ENCODE measurements at regions of chr4 and their contacts with region 1.

Region 1: GRCh38 chr4:122914292-122914904 is 8.0 kb downstream of the NUDT6 start:
- DNase-seq: peak; percentile 77
- H3K4me3 ChIP-seq: no peak overlapping the region
- H3K27ac ChIP-seq: no peak overlapping the region
- H3K4me1 ChIP-seq: peaks cover 4% of the 10 kb centered on the region
- H3K27me3 ChIP-seq: no peaks in the 10 kb centered on the region
- CTCF ChIP-seq: peak; percentile 27 to 30
- POLR2A ChIP-seq: no peak

Region 2: DNA sequence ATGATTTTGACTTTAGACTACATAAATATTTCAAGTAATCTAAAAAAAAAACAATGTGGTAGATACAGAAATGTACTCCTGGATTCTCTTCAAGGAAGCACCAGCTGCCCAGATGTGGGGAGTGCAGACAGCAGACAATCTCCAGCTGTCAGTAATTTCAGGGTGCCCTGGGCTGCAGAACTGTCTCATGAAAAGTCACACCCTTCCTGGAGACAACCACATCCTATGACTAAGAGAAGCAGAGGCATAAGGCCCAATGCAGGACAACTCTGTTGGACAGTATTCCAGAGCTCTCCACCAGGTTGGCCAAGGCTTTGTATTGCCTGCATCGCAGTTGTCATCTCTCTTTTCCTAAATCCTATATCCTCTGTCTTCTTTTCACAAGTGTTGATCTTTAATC is 796.7 kb before region 1 on chr4:
- CTCF ChIA-PET with region 1: no interaction called
- POLR2A ChIA-PET with region 1: no interaction called
- dilution Hi-C with region 1: no loop called
- intact Hi-C with region 1: no loop called
- DNase-seq: no peak
- H3K4me3 ChIP-seq: no peak overlapping the region
- H3K27ac ChIP-seq: no peak overlapping the region
- H3K4me1 ChIP-seq: no peaks in the 10 kb centered on the region
- H3K27me3 ChIP-seq: no peaks in the 10 kb centered on the region
- CTCF ChIP-seq: no peak
- POLR2A ChIP-seq: no peak

Region 3: GRCh38 chr4:122602277-122603142 is 311.9 kb before region 1 on chr4:
- CTCF ChIA-PET with region 1: interaction called, 32 read pairs
- POLR2A ChIA-PET with region 1: no interaction called
- dilution Hi-C with region 1: no loop called
- intact Hi-C with region 1: loop called (anchors 1 kb)
- DNase-seq: peak; percentile 58
- H3K4me3 ChIP-seq: no peak overlapping the region
- H3K27ac ChIP-seq: no peak overlapping the region
- H3K4me1 ChIP-seq: no peaks in the 10 kb centered on the region
- H3K27me3 ChIP-seq: peaks cover 10 to 14% of the 10 kb centered on the region in 2 experiments
- CTCF ChIP-seq: peak; percentile 15 to 16
- POLR2A ChIP-seq: no peak

Region 4: DNA sequence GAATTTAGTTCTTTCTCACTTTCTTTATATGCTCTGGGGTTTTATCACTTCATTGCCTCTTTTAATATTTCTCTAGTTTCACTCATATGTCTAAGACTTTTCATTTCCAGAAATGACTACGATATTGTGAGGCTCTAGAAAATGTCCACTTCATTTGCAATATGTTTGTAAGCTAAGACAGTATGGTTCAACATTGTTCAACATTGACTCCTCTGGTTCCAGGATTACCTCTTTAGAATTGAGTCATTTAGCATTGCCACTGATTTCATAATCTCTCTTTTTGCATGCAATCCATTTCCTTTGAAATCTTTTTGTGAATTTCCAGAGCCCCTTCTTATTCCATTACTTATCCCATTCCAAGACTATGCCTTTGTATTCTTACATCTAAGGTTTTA is 149.6 kb before region 1 on chr4:
- CTCF ChIA-PET with region 1: interaction called, 183 read pairs
- POLR2A ChIA-PET with region 1: no interaction called
- dilution Hi-C with region 1: loop called (anchors 25 kb)
- intact Hi-C with region 1: no loop called
- DNase-seq: peak; percentile 44
- H3K4me3 ChIP-seq: no peak overlapping the region
- H3K27ac ChIP-seq: peak overlapping the region; percentile 58
- H3K4me1 ChIP-seq: peaks cover 16% of the 10 kb centered on the region
- H3K27me3 ChIP-seq: no peaks in the 10 kb centered on the region
- CTCF ChIP-seq: no peak
- POLR2A ChIP-seq: no peak

Region 5: DNA sequence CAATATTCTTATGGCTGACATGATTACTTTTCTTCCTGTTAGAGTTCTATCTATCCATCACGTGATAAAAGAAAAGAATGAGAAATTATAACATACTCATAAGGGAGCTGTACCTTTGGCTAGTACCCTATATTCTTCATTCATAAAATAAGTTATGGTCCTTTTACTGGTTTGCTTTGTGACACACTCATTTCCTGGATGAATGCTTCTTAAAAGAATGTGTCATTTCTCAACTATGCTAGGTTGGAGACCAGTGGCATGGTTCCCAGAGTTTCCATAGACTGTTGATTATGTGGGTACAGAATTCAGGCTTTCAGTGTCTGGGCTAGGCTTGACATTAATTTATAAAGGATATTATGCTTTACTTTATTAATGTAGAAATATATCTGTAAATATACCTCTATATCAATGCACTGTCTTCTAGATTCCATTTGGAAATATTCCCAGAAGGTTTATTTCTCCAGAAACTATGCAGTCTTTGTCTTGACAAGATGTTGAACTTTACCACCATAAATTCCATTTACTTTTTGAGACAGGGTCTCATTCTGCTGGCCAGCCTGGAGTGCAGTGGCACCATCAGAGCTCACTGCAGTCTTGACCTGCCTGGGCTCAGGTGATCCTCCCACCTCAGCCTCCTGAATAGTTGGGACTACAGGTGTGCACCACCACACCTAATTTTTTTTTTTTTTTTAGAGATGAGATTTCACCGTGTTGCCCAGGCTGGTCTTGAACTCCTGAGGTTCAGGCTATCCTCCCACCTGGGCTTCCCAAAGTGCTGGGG is 15.8 kb before region 1 on chr4:
- CTCF ChIA-PET with region 1: interaction called, 26 read pairs
- POLR2A ChIA-PET with region 1: no interaction called
- dilution Hi-C with region 1: no loop called
- intact Hi-C with region 1: no loop called
- DNase-seq: peak; percentile 90
- H3K4me3 ChIP-seq: no peak overlapping the region
- H3K27ac ChIP-seq: peak overlapping the region; percentile 76
- H3K4me1 ChIP-seq: peaks cover 33% of the 10 kb centered on the region
- H3K27me3 ChIP-seq: no peaks in the 10 kb centered on the region
- CTCF ChIP-seq: no peak
- POLR2A ChIP-seq: peak; percentile 24

Region 6: DNA sequence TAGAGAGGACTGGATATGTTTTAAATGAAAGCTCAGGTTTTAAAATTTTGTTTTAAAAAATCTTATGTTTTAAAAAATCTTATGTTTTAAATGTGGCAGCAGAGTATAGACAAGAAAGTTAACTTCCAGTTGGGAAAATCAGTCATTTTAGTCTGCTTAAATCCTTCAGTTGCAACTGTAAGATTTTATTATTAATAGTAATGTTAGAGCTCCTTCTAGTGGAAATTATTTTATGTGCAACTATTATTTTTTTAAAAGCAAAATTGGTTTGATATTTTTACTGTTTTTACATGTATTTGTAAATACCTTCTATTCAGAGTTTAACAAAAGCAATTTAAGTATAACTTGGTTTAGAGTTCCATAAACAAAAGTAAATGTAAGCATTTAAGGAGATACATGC is 16.5 kb after region 1 on chr4:
- CTCF ChIA-PET with region 1: interaction called, 14 read pairs
- POLR2A ChIA-PET with region 1: no interaction called
- dilution Hi-C with region 1: no loop called
- intact Hi-C with region 1: no loop called
- DNase-seq: peak; percentile 40
- H3K4me3 ChIP-seq: no peak overlapping the region
- H3K27ac ChIP-seq: no peak overlapping the region
- H3K4me1 ChIP-seq: no peaks in the 10 kb centered on the region
- H3K27me3 ChIP-seq: no peaks in the 10 kb centered on the region
- CTCF ChIP-seq: peak in 1 of 2 donors; percentile 25
- POLR2A ChIP-seq: no peak